ENCODE measurements at regions of chr10 and their contacts with region 1.

Region 1: GRCh38 chr10:74008212-74008731 is 10.4 kb downstream of the VCL start:
- DNase-seq: no peak
- H3K4me3 ChIP-seq: no peak overlapping the region
- H3K27ac ChIP-seq: no peak overlapping the region
- H3K4me1 ChIP-seq: peaks cover 0 to 15% (median under 1%) of the 10 kb centered on the region in 4 experiments; a peak in 3 of 7 replicates
- H3K27me3 ChIP-seq: no peaks in the 10 kb centered on the region
- CTCF ChIP-seq: no peak
- EP300 ChIP-seq: no peak
- POLR2A ChIP-seq: peak in 1 of 2 experiments; percentile 82; a peak in 1 of 3 replicates
- RAD21 ChIP-seq: no peak

Region 2: DNA sequence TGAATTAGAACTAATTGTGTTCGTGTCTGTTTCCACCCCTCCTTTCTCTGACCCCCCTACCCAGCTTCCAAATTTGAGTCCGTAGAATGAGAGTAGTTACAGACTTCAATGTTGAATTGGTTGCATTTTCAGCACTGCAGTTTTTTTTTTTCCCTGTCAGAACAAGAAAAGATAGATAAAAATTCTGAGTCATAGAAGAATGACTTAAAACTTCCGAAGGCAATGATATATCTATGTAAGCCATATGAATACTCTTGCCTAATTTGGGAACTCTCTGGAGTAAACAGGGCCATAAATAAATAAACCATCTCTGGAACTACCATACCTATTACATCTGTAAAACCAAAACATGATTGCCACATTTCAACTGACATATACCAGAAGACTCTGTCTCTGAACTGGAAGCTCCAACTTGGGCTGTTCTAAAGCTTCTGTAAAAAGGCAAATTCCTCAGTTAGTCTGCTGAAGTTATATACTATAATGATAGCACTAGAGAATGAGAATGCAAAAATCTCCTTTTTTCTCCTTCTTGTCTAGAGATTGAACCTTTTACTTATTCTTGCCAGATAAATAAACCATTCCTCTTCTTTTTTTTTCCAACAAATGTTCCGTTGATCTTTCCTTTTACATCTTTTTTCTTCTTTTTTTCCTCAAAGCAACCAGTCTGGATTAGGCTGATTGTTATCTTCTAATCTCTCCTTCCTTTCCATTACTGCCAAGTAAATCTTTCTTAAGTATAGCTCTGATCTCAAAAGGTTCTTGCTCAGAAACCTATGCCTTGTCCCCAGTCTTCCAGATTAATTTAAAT is 13.2 kb after region 1 on chr10:
- CTCF ChIA-PET with region 1: interaction called, 5 read pairs
- POLR2A ChIA-PET with region 1: interaction called, 170 read pairs
- DNase-seq: no peak
- H3K4me3 ChIP-seq: no peak overlapping the region
- H3K27ac ChIP-seq: no peak overlapping the region
- H3K4me1 ChIP-seq: peaks cover 0 to 10% (median 2%) of the 10 kb centered on the region in 4 experiments; a peak in 4 of 7 replicates
- H3K27me3 ChIP-seq: no peaks in the 10 kb centered on the region
- CTCF ChIP-seq: no peak
- EP300 ChIP-seq: no peak
- POLR2A ChIP-seq: 0 out of 3 replicates have a peak, but pooled peaks of 1 of the 2 experiments have one; percentile 35
- RAD21 ChIP-seq: no peak

Region 3: DNA sequence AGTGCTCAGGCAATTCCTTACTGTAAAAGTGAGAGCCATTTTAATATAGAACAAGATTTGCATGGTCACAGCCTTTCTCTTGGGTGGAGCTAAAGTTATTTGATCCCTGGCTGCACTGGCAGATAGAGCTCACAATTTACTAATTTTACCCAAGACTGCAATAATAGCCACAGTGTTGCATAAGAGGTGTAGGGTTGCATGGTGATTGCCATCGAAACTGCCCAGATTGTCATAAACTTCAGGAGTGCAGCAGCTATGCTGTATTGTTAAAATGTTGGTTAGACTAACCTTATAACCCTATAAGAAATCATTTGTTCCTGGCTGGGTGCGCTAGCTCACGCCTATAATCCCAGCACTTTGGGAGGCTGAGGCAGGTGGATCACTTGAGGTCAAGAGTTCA is 39.6 kb after region 1 on chr10:
- CTCF ChIA-PET with region 1: no interaction called
- POLR2A ChIA-PET with region 1: no interaction called
- DNase-seq: no peak
- H3K4me3 ChIP-seq: no peak overlapping the region
- H3K27ac ChIP-seq: no peak overlapping the region
- H3K4me1 ChIP-seq: peaks cover 0 to 6% (median 3%) of the 10 kb centered on the region in 4 experiments; a peak in 3 of 7 replicates
- H3K27me3 ChIP-seq: no peaks in the 10 kb centered on the region
- CTCF ChIP-seq: no peak
- EP300 ChIP-seq: no peak
- POLR2A ChIP-seq: no peak
- RAD21 ChIP-seq: no peak

Region 4: DNA sequence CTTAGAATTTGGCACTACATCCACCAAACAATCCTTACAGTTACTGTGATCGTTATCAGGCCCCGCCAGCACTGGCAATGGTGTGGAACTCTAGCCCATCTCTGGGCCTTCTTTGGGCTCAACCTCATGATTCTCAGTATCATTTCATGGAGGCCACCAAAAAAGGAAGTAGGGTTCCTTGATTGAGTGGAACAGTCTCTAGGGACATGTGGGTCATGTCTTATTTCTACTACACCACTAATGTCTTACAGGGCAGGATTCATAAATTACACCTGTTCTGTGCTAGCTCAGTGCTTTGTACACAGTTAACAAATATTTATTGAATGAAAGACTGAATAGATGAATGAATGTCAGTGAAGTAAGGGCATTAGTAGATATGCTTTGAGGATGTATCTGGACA is 88.5 kb after region 1 on chr10:
- CTCF ChIA-PET with region 1: no interaction called
- POLR2A ChIA-PET with region 1: no interaction called
- DNase-seq: no peak
- H3K4me3 ChIP-seq: no peak overlapping the region
- H3K27ac ChIP-seq: no peak overlapping the region
- H3K4me1 ChIP-seq: no peaks in the 10 kb centered on the region
- H3K27me3 ChIP-seq: no peaks in the 10 kb centered on the region
- CTCF ChIP-seq: no peak
- EP300 ChIP-seq: no peak
- POLR2A ChIP-seq: no peak
- RAD21 ChIP-seq: no peak